ENCODE measurements at regions of chr6 and their contacts with region 1.

Region 1: GRCh38 chr6:169824848-169825557 is 73.6 kb downstream of the ERMARD start:
- DNase-seq: peak in 2 of 7 donors; percentile 8 to 31
- H3K4me3 ChIP-seq: no peak overlapping the region
- H3K27ac ChIP-seq: no peak overlapping the region
- H3K4me1 ChIP-seq: no peaks in the 10 kb centered on the region
- H3K27me3 ChIP-seq: no peaks in the 10 kb centered on the region
- CTCF ChIP-seq: no peak
- POLR2A ChIP-seq: no peak

Region 2: DNA sequence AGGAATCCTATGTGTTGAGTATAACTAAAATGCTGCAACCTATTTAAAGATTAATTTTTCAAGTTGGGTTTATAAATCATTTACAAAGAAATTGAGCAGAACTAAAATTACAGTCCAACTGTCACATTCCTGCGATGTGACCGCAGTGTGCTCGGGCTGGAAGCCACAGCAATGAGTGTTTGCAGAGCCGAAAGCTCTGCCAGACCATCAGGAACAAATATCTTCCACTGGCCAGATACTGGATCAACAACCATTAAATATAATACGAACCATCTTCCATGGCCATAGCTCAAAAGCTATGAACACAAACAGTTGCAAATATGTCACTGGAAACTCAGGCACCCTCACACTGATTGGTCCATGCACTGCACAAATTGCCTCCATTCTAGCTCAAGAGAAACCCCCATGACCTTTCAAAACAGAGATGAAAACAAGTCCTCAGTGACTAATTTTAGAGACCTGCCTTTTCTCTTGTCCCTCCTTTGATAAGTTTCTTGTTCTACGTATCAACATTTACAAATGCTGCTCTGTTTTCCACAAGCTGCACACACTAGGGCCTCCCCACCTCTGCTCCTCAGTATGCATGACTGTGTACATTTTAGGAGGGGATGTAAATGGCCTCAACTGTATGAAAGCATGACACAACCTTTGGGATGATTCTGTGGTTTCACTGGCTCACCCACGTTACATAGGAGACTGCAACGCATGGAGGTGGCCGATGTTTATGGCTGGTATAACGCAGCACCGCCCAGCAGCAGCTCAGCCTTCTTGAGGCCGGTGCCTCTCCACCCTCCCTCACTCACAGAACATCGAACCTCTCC is 294.9 kb before region 1 on chr6:
- intact Hi-C with region 1: no loop called
- DNase-seq: no peak
- H3K4me3 ChIP-seq: no peak overlapping the region
- H3K27ac ChIP-seq: no peak overlapping the region
- H3K4me1 ChIP-seq: no peaks in the 10 kb centered on the region
- H3K27me3 ChIP-seq: no peaks in the 10 kb centered on the region
- CTCF ChIP-seq: no peak
- POLR2A ChIP-seq: no peak

Region 3: DNA sequence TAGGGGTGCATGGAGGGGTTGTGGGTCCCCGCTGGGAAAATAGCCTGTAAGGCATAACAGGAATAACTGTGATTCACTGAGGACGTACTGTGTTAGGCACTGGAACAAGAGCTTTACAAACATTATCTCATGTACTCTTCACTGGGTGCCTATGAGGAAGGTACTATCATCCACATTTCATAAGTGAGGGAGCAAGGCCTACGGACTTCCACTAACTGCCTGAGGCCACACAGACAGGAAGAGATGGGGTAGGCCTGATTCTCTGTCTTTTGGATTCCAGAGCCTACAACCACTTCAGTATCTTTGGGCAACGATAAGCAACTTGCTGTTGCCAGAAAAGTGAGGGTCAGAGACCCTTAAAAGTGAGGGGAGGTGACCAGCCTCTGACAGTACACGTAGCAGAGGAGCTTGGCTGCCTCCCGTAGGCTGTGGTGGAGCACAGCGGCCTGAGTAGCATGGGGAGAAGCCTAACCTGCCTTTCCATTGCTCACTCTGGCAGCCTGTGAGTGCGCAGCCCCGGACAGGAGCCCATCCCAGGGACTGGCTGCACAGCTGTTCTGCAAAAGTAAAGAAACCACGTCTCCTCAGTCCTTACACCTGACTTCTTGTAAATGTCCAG is 697.7 kb after region 1 on chr6:
- intact Hi-C with region 1: loop called in 1 of 2 experiments (anchors 5 kb)
- DNase-seq: no peak
- H3K4me3 ChIP-seq: no peak overlapping the region
- H3K27ac ChIP-seq: no peak overlapping the region
- H3K4me1 ChIP-seq: no peaks in the 10 kb centered on the region
- H3K27me3 ChIP-seq: no peaks in the 10 kb centered on the region
- CTCF ChIP-seq: no peak
- POLR2A ChIP-seq: no peak